ENCODE measurements at regions of chrX and their contacts with region 1.

Region 1: GRCh38 chrX:127490000-127490399 is 562.2 kb downstream of the ACTRT1 start:
- DNase-seq: no peak
- ATAC-seq: no peak
- H3K4me3 ChIP-seq: no peak overlapping the region
- H3K27ac ChIP-seq: no peak overlapping the region
- H3K4me1 ChIP-seq: no peaks in the 10 kb centered on the region
- H3K27me3 ChIP-seq: no peaks in the 10 kb centered on the region
- CTCF ChIP-seq: no peak
- POLR2A ChIP-seq: no peak
- RAD21 ChIP-seq: no peak

Region 2: GRCh38 chrX:127578395-127578794 is 88.4 kb after region 1 on chrX:
- CTCF ChIA-PET with region 1: no interaction called
- POLR2A ChIA-PET with region 1: no interaction called
- RAD21 ChIA-PET with region 1: no interaction called
- intact Hi-C with region 1: no loop called
- DNase-seq: no peak
- ATAC-seq: no peak
- H3K4me3 ChIP-seq: no peak overlapping the region
- H3K27ac ChIP-seq: no peak overlapping the region
- H3K4me1 ChIP-seq: no peaks in the 10 kb centered on the region
- H3K27me3 ChIP-seq: no peaks in the 10 kb centered on the region
- CTCF ChIP-seq: no peak
- POLR2A ChIP-seq: no peak
- RAD21 ChIP-seq: no peak

Region 3: DNA sequence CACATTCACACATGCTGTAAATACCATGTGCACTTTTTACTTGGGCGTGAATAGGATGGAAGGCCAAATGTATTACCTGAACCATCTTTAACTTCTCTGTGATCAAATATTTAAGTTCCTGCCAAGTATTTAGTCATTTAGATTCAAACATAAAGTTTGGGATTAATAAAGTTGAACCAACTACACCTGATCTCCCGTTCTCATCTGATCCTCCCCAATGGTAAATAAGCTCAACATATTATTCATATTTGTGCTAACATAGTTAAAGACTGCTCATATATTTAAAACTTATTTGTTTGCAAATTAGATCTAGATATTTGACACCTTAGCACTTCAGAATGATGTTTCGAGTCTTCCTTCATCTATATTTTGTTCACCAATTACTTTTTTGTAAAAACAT is 165.6 kb after region 1 on chrX:
- CTCF ChIA-PET with region 1: no interaction called
- POLR2A ChIA-PET with region 1: no interaction called
- RAD21 ChIA-PET with region 1: no interaction called
- intact Hi-C with region 1: no loop called
- DNase-seq: no peak
- ATAC-seq: no peak
- H3K4me3 ChIP-seq: no peak overlapping the region
- H3K27ac ChIP-seq: no peak overlapping the region
- H3K4me1 ChIP-seq: no peaks in the 10 kb centered on the region
- H3K27me3 ChIP-seq: no peaks in the 10 kb centered on the region
- CTCF ChIP-seq: no peak
- POLR2A ChIP-seq: no peak
- RAD21 ChIP-seq: no peak

Region 4: DNA sequence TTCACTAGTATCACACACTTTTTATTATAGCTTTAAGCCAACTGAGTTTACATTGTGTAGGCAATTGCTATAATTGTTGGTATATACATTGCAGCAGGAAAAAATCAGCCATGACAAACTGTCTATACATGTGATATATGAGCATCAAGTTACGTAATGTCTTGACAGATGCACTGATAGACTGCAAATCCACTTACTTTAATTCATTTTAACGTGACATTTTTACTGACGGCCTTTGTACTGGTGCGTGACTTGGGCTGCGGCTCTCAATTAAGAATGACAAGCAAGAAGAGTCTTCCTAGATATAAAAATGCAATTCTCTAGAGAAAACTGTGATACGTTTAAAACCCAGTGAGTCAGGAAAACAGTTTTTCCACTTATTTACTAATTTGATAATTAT is 418.4 kb after region 1 on chrX:
- CTCF ChIA-PET with region 1: no interaction called
- POLR2A ChIA-PET with region 1: no interaction called
- RAD21 ChIA-PET with region 1: no interaction called
- intact Hi-C with region 1: loop called (anchors 10 kb)
- DNase-seq: no peak
- ATAC-seq: no peak
- H3K4me3 ChIP-seq: no peak overlapping the region
- H3K27ac ChIP-seq: no peak overlapping the region
- H3K4me1 ChIP-seq: no peaks in the 10 kb centered on the region
- H3K27me3 ChIP-seq: no peaks in the 10 kb centered on the region
- CTCF ChIP-seq: no peak
- POLR2A ChIP-seq: no peak
- RAD21 ChIP-seq: no peak

Measured in HCT116 (cell line).